ENCODE measurements at regions of chr4 and their contacts with region 1.

Region 1: GRCh38 chr4:38675146-38676121 is 11.4 kb downstream of the KLF3 start:
- DNase-seq: peak in 2 of 3 donors; percentile 53 to 79
- ATAC-seq: peak; percentile 49 to 58 (median 51)
- H3K4me3 ChIP-seq: peak overlapping the region in 2 of 3 donors; percentile 25 to 44
- H3K27ac ChIP-seq: peak overlapping the region; percentile 34 to 61 (median 49)
- H3K4me1 ChIP-seq: peaks cover 0 to 77% (median 37%) of the 10 kb centered on the region in 4 donors
- H3K27me3 ChIP-seq: no peaks in the 10 kb centered on the region
- CTCF ChIP-seq: peak; percentile 89 to 96 (median 93)
- POLR2A ChIP-seq: no peak

Region 2: GRCh38 chr4:38179690-38180377 is 495.6 kb before region 1 on chr4:
- intact Hi-C with region 1: loop called in 1 of 2 experiments (anchors 10 kb)
- DNase-seq: peak; percentile 69 to 86 (median 73)
- ATAC-seq: peak; percentile 75 to 84 (median 79)
- H3K4me3 ChIP-seq: no peak overlapping the region
- H3K27ac ChIP-seq: peak overlapping the region in 2 of 3 donors; percentile 1 to 15
- H3K4me1 ChIP-seq: peaks cover 0 to 36% (median 16%) of the 10 kb centered on the region in 4 donors
- H3K27me3 ChIP-seq: no peaks in the 10 kb centered on the region
- CTCF ChIP-seq: peak; percentile 93 to 96 (median 94)
- POLR2A ChIP-seq: no peak

Region 3: DNA sequence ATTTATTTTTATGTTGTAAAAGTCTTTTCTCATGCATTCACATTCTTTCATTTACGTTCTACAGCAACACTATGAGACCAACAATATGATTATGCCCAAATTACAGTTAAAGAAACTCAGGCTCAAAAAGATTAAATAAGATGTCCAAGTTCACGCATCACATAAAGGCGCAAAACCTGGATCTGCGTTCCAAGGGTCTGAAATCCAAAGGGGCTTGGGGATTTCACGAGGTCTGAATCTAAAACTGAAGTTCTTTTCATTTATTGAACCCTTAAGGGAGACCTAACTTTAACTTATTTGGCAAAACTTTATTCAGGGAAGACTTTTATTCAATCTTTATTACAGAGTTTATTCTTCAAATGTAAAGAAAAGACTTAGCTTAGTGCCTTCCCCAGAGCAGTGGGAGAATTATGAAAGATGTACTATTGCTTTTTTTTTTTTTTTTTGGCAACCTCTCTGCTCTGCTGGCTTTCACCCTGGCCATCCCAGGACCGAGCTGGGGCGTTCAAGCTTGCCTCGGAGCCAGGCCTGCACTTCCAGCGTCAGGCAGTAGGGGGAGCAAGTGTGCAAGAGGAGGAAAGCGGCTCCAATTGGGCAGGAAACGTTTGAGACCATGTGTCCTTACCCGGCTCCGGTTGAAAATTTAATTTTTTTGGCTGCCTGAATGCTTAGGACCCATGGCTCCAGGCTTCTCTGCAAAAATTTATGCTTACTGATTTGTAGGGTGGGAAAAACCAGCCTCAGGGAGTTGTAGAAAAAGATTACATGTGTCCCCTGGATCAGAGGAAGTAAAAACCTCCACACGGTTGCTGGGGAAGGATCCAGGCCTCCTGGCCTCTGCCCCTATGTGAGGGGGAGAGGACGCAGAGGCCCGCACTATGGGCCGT is 355.7 kb before region 1 on chr4:
- intact Hi-C with region 1: loop called in 1 of 2 experiments (anchors 5 kb)
- DNase-seq: peak; percentile 91 to 97 (median 95)
- ATAC-seq: peak; percentile 88 to 93 (median 90)
- H3K4me3 ChIP-seq: peak overlapping the region; percentile 19 to 47 (median 41)
- H3K27ac ChIP-seq: peak overlapping the region; percentile 73 to 81 (median 74)
- H3K4me1 ChIP-seq: peaks cover 0 to 20% (median 8%) of the 10 kb centered on the region in 4 donors
- H3K27me3 ChIP-seq: no peaks in the 10 kb centered on the region
- CTCF ChIP-seq: peak; percentile 98
- POLR2A ChIP-seq: no peak

Region 4: DNA sequence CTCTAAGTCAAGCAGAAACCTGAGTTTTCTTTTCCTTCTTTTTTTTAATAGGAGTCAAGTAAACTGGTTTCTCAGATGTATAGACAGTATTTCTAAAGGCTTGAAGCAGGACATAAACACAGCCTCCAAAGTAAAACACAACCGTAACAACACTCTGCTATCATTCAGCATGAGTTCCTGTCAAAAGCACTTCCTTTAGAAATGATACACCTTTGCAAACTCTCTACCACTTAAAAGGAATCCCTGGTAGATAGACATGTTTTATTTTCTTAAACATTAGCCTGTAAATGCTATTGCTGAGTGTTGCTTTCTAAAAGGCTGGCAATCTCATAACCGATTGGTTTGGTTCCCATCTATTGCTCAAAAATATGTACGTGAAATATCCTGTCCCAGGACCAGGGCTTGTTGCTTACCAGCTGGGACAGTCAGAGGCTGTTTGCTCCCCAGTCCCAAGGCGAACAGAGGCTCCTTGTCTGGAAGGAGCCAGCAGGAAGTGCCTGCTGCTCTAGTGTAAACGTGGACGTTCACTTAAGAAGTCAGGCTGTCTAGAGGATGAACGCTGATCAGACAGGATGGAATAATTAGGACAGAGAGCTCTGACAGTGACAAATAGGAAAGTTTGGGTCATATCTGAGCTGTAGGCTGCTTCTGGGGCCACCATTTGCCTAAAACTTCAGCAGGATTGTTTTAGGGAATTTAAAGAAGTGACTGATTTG is 185.4 kb before region 1 on chr4:
- intact Hi-C with region 1: loop called in 1 of 2 experiments (anchors 10 kb)
- DNase-seq: no peak
- ATAC-seq: peak; percentile 22 to 54 (median 38)
- H3K4me3 ChIP-seq: no peak overlapping the region
- H3K27ac ChIP-seq: peak overlapping the region in 2 of 3 donors; percentile 59 to 67
- H3K4me1 ChIP-seq: peaks cover 0 to 22% (median 11%) of the 10 kb centered on the region in 4 donors
- H3K27me3 ChIP-seq: no peaks in the 10 kb centered on the region
- CTCF ChIP-seq: no peak
- POLR2A ChIP-seq: no peak

Region 5: GRCh38 chr4:38574559-38575333 is 100.7 kb before region 1 on chr4:
- intact Hi-C with region 1: loop called in 1 of 2 experiments (anchors 10 kb)
- DNase-seq: peak; percentile 77 to 85 (median 83)
- ATAC-seq: peak; percentile 93 to 97 (median 97)
- H3K4me3 ChIP-seq: no peak overlapping the region
- H3K27ac ChIP-seq: no peak overlapping the region
- H3K4me1 ChIP-seq: peaks cover 0 to 9% (median 0%) of the 10 kb centered on the region in 4 donors
- H3K27me3 ChIP-seq: no peaks in the 10 kb centered on the region
- CTCF ChIP-seq: no peak
- POLR2A ChIP-seq: no peak

Measured in right lobe of liver (tissue), 6 donors.